ENCODE measurements at regions of chrX and their contacts with region 1.

Region 1: GRCh38 chrX:110002300-110003166 is at the start of gene TMEM164:
- DNase-seq: peak; percentile 70 to 94
- H3K4me3 ChIP-seq: peak within 1 kb of the TSS; percentile 70
- H3K27ac ChIP-seq: peak within 1 kb of the TSS; percentile 72
- H3K4me1 ChIP-seq: peaks cover 37% of the 10 kb centered on the region
- H3K27me3 ChIP-seq: no peaks in the 10 kb centered on the region
- CTCF ChIP-seq: no peak
- total RNA-seq, gene TMEM164: 44.5 and 53.1 TPM in 2 replicates

Region 2: GRCh38 chrX:108270739-108271396 is 1731.7 kb before region 1 on chrX:
- CTCF ChIA-PET with region 1: no interaction called
- POLR2A ChIA-PET with region 1: interaction called, 15 read pairs
- intact Hi-C with region 1: no loop called
- DNase-seq: no peak
- H3K4me3 ChIP-seq: no peak overlapping the region
- H3K27ac ChIP-seq: no peak overlapping the region
- H3K4me1 ChIP-seq: no peaks in the 10 kb centered on the region
- H3K27me3 ChIP-seq: no peaks in the 10 kb centered on the region
- CTCF ChIP-seq: no peak

Region 3: DNA sequence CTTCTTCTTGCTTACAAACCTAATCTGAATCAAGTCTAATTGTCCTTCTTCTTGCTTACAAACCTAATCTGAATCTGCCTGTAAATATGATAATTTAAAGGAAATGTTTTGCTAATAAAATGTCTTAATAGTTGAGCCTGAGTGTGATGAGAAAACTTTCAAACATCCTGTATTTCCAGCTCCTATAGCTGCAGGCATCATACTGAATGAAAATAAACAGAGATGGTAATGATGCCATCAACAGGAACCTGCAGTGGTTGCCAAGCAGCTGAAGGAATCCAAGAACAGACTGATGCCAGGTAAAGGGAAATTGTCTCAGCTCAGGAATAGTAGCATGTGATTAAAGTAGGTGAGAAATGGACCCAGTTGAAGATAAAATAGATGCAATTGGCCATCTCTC is 1110.0 kb before region 1 on chrX:
- CTCF ChIA-PET with region 1: no interaction called
- POLR2A ChIA-PET with region 1: no interaction called
- intact Hi-C with region 1: no loop called
- DNase-seq: no peak
- H3K4me3 ChIP-seq: no peak overlapping the region
- H3K27ac ChIP-seq: no peak overlapping the region
- H3K4me1 ChIP-seq: no peaks in the 10 kb centered on the region
- H3K27me3 ChIP-seq: no peaks in the 10 kb centered on the region
- CTCF ChIP-seq: no peak

Region 4: DNA sequence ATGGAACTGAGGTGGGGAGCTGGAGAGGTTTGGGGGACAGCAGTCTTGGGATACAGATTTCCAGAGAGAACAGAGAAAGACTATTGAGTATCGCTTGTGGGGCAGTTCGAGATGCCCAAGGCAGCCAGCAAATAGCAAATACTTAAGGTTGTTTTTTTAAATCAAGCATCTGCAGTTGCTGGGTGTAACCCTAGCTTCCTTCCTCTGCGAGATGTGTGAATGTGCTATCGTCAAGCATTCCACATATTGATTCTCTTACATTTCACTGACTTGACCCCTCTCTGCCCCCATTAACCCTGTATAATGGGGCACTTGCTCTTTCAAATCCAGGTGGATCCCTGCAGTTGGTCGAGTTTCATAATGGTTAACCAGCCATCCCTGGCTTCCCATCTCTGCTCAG is 401.1 kb before region 1 on chrX:
- CTCF ChIA-PET with region 1: no interaction called
- POLR2A ChIA-PET with region 1: no interaction called
- intact Hi-C with region 1: no loop called
- DNase-seq: no peak
- H3K4me3 ChIP-seq: no peak overlapping the region
- H3K27ac ChIP-seq: no peak overlapping the region
- H3K4me1 ChIP-seq: no peaks in the 10 kb centered on the region
- H3K27me3 ChIP-seq: peaks cover 64% of the 10 kb centered on the region
- CTCF ChIP-seq: no peak

Region 5: GRCh38 chrX:109911046-109911445 is 91.5 kb before region 1 on chrX:
- CTCF ChIA-PET with region 1: no interaction called
- POLR2A ChIA-PET with region 1: no interaction called
- intact Hi-C with region 1: loop called (anchors 5 kb)
- DNase-seq: no peak
- H3K4me3 ChIP-seq: no peak overlapping the region
- H3K27ac ChIP-seq: no peak overlapping the region
- H3K4me1 ChIP-seq: no peaks in the 10 kb centered on the region
- H3K27me3 ChIP-seq: no peaks in the 10 kb centered on the region
- CTCF ChIP-seq: peak; percentile 80

Region 6: GRCh38 chrX:109952984-109953905 is 49.3 kb before region 1 on chrX:
- CTCF ChIA-PET with region 1: no interaction called
- POLR2A ChIA-PET with region 1: no interaction called
- intact Hi-C with region 1: loop called (anchors 5 kb)
- DNase-seq: no peak
- H3K4me3 ChIP-seq: no peak overlapping the region
- H3K27ac ChIP-seq: no peak overlapping the region
- H3K4me1 ChIP-seq: peaks cover 22% of the 10 kb centered on the region
- H3K27me3 ChIP-seq: no peaks in the 10 kb centered on the region
- CTCF ChIP-seq: no peak

Region 7: GRCh38 chrX:110046001-110046400 is 43.5 kb after region 1 on chrX:
- CTCF ChIA-PET with region 1: no interaction called
- POLR2A ChIA-PET with region 1: no interaction called
- intact Hi-C with region 1: no loop called
- DNase-seq: no peak
- H3K4me3 ChIP-seq: no peak overlapping the region
- H3K27ac ChIP-seq: no peak overlapping the region
- H3K4me1 ChIP-seq: 0 out of 2 replicates have a peak, but pooled peaks cover 7% of the 10 kb centered on the region
- H3K27me3 ChIP-seq: no peaks in the 10 kb centered on the region
- CTCF ChIP-seq: no peak

Region 8: DNA sequence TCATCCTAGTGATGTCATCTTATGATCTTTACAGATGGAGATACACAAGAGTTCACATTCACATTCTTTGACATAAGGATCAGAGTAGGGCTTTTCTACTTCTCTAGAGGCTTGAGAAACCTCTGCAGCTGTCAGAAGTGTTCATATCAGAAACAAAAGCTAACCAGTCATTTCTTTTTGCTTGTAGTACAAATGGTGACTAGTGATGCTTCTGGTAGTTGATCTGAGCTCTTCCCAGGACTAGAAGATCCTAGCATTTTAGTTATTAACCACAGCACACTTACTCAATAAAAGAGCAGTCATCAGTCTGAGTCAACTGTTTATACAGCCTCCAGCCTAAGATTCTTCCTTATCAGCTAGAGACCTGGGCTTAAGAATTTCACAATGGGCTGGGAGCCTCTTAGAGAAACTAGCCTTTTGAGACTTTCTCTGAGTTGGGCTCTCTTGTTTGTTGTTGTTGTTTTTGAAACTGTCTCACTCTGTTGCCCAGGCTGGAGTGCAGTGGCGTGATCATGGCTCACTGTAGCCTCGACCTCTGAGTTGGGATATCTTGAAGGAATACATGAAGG is 84.5 kb after region 1 on chrX:
- CTCF ChIA-PET with region 1: no interaction called
- POLR2A ChIA-PET with region 1: interaction called, 3 read pairs
- intact Hi-C with region 1: loop called (anchors 1 kb)
- DNase-seq: peak; percentile 51 to 99
- H3K4me3 ChIP-seq: peak overlapping the region; percentile 55; the same call in 1 of the 2 replicates
- H3K27ac ChIP-seq: peak overlapping the region; percentile 99
- H3K4me1 ChIP-seq: peaks cover 55% of the 10 kb centered on the region
- H3K27me3 ChIP-seq: no peaks in the 10 kb centered on the region
- CTCF ChIP-seq: 0 out of 2 replicates have a peak, but pooled peaks have one; percentile 15

Region 9: DNA sequence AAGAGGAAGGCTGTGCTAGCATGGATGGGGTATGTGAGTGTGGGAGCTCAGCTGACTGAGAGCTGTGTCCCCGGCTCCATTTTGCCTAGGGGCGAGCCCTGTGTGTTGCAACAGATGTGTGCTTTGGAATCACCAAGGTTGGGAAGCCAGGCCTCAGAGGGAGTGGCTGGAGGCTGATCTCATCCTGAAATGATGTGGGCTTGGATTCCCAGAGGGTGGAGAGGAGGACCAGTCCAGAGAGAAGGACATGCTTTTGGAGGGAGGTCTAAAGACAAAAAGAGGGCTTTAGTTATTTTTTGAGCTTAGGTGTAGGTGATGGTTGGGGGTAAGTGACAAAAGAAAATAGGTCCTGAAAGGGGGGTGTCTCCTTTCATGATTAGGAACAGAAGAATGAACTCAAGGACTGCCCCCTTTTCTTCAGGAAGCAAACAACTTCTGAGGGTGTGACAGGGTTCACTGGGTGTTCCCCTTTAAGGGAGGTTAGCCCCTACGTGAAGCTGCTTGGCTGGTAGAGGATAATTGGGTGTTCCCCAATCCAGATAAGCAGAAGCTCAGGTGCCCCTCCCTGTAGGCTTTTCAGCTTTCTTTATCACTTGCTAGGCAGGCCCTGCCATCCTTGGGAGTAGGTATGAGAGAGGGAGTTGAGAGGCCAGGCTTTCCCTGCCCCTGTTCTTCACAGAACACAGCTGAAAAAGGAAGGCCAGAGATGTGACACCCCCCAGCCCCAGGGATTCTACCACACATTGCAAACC is 400.1 kb after region 1 on chrX:
- CTCF ChIA-PET with region 1: no interaction called
- POLR2A ChIA-PET with region 1: no interaction called
- intact Hi-C with region 1: loop called (anchors 1 kb)
- DNase-seq: peak; percentile 77 to 86
- H3K4me3 ChIP-seq: peak overlapping the region; percentile 6; the same call in 1 of the 2 replicates
- H3K27ac ChIP-seq: peak overlapping the region; percentile 70
- H3K4me1 ChIP-seq: peaks cover 60% of the 10 kb centered on the region
- H3K27me3 ChIP-seq: no peaks in the 10 kb centered on the region
- CTCF ChIP-seq: no peak